MCF 10A (cell line): ENCODE measurements at regions of chr2 and their contacts with region 1.

Region 1: GRCh38 chr2:102141970-102142828 is at the start of gene IL1R1:
- DNase-seq: peak; percentile 80
- H3K4me3 Mint-ChIP-seq: peak within 1 kb of the TSS; percentile 81
- H3K27ac Mint-ChIP-seq: peak within 1 kb of the TSS; percentile 68
- H3K4me1 Mint-ChIP-seq: no peaks in the 10 kb centered on the region
- H3K27me3 Mint-ChIP-seq: no peaks in the 10 kb centered on the region
- CTCF ChIP-seq: no peak
- total RNA-seq, gene IL1R1: 5.2 and 6.0 TPM in 2 replicates

Region 2: DNA sequence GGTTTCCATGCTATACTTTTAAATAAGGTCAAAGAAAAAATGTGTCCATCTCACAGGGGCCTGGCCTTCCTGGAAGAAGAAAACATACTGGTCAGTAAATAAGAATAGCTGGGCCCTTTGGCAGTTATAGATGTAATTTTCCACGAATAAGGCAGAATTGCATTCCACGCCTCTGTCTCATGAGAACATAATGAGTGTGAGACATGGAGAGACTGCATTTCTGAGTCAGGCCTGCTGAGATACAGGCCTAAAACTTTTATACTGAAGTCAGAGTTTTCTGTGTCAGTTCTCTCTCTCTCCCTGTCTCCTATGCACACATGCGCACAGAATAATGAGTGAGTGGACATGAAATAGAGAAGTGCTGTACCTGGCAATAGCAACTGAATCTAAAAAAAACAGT is 20.1 kb before region 1 on chr2:
- CTCF ChIA-PET with region 1: interaction called, 6 read pairs
- POLR2A ChIA-PET with region 1: interaction called, 11 read pairs
- intact Hi-C with region 1: no loop called
- DNase-seq: no peak
- H3K4me3 Mint-ChIP-seq: no peak overlapping the region
- H3K27ac Mint-ChIP-seq: peak overlapping the region; percentile 27
- H3K4me1 Mint-ChIP-seq: peaks cover 19% of the 10 kb centered on the region
- H3K27me3 Mint-ChIP-seq: no peaks in the 10 kb centered on the region
- CTCF ChIP-seq: no peak

Region 3: GRCh38 chr2:102129082-102129481 is 13.1 kb before region 1 on chr2:
- CTCF ChIA-PET with region 1: interaction called, 8 read pairs
- POLR2A ChIA-PET with region 1: interaction called, 13 read pairs
- intact Hi-C with region 1: no loop called
- DNase-seq: no peak
- H3K4me3 Mint-ChIP-seq: no peak overlapping the region
- H3K27ac Mint-ChIP-seq: no peak overlapping the region
- H3K4me1 Mint-ChIP-seq: peaks cover 28% of the 10 kb centered on the region
- H3K27me3 Mint-ChIP-seq: no peaks in the 10 kb centered on the region
- CTCF ChIP-seq: no peak

Region 4: DNA sequence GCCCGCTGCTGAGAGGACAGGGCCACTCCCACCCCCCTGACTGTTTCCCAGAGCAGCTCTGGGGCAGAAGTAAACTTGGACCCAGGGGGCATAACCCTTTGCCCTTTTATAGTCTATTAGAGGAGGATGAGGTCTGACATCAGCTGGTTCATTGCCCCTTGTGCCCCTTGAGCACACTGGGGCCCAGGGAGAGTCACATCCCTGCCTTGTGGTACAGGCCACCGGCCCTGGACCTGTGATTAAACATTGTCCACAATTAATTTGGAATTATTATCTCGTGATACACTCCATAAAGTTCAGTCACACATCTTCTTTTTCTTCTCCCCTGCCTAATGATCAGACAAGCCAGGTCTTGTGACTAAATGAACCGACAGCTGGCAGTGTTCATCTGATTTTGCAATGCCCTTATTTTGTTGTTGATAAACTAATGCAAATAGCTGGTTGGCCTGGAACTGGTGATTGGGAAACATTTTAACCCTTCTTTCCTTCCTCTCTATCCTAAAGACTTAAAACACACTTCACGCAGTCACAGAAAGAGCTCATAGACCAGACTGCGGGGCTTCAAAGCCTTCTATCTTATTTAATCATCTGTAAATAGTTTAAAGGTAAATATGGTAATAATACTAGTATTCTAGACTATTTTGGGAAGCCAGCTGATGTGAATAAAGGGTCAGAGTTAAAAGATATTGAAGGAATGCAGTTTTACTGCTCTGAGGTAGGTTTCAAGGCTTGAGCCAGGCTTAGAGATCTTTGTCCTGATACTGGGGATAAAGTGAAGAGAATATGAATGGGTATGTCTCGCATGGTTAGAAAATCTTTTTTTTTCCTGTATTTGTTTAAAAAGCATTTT is 13.7 kb after region 1 on chr2:
- CTCF ChIA-PET with region 1: interaction called, 4 read pairs
- POLR2A ChIA-PET with region 1: interaction called, 29 read pairs
- intact Hi-C with region 1: no loop called
- DNase-seq: peak; percentile 62
- H3K4me3 Mint-ChIP-seq: no peak overlapping the region
- H3K27ac Mint-ChIP-seq: peak overlapping the region; percentile 94
- H3K4me1 Mint-ChIP-seq: peaks cover 30% of the 10 kb centered on the region
- H3K27me3 Mint-ChIP-seq: no peaks in the 10 kb centered on the region
- CTCF ChIP-seq: no peak